CD4-positive, alpha-beta memory T cell (primary cell): ENCODE measurements at regions of chr6 and their contacts with region 1.

Region 1: GRCh38 chr6:135909737-135910387 is 58.4 kb downstream of the PDE7B start:
- DNase-seq: peak; percentile 57 to 73 (median 71)
- H3K4me3 ChIP-seq: no peak overlapping the region
- H3K4me3 Mint-ChIP-seq: no peak overlapping the region
- H3K27ac ChIP-seq: no peak overlapping the region
- H3K27ac Mint-ChIP-seq: no peak overlapping the region
- H3K4me1 ChIP-seq: no peaks in the 10 kb centered on the region
- H3K4me1 Mint-ChIP-seq: peaks cover 2 to 5% (median 4%) of the 10 kb centered on the region in 4 donors
- H3K27me3 ChIP-seq: no peaks in the 10 kb centered on the region
- H3K27me3 Mint-ChIP-seq: no peaks in the 10 kb centered on the region

Region 2: DNA sequence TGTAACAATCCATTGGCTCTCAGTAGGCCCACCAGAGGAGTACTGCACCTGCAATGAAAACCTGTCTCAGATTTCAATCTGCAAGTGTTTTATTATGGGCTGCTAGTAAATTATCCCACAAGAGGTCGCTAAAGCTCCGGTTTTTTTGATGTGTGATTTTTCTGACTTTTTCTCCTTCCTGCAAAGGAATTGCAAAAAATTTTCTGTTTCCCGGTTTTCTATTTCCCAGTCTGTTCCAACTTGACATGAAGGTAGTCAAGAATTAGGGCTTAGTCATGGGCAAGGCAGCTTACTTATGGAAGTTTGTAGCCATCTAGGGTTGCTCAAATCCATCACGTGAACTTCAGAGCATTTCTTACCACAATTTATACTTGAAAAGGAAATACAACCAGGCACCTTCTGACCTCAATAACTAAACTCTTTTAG is 373.9 kb before region 1 on chr6:
- CTCF ChIA-PET with region 1: interaction called, 58 read pairs
- POLR2A ChIA-PET with region 1: interaction called, 3 read pairs
- intact Hi-C with region 1: loop called (anchors 1 kb)
- DNase-seq: peak in 4 of 5 donors; percentile 38 to 47 (median 40)
- H3K4me3 ChIP-seq: no peak overlapping the region
- H3K4me3 Mint-ChIP-seq: peak overlapping the region in 5 of 8 donors; percentile 24 to 57 (median 35)
- H3K27ac ChIP-seq: no peak overlapping the region
- H3K27ac Mint-ChIP-seq: peak overlapping the region in 1 of 7 donors; percentile 2
- H3K4me1 ChIP-seq: no peaks in the 10 kb centered on the region
- H3K4me1 Mint-ChIP-seq: peaks cover 2 to 6% (median 4%) of the 10 kb centered on the region in 4 donors
- H3K27me3 ChIP-seq: no peaks in the 10 kb centered on the region
- H3K27me3 Mint-ChIP-seq: peaks cover 0 to 7% of the 10 kb centered on the region in 2 donors

Region 3: GRCh38 chr6:135680964-135681913 is 228.6 kb before region 1 on chr6:
- CTCF ChIA-PET with region 1: interaction called, 83 read pairs
- POLR2A ChIA-PET with region 1: no interaction called
- intact Hi-C with region 1: loop called (anchors 1 kb)
- DNase-seq: no peak
- H3K4me3 ChIP-seq: no peak overlapping the region
- H3K4me3 Mint-ChIP-seq: no peak overlapping the region
- H3K27ac ChIP-seq: no peak overlapping the region
- H3K27ac Mint-ChIP-seq: no peak overlapping the region
- H3K4me1 ChIP-seq: no peaks in the 10 kb centered on the region
- H3K4me1 Mint-ChIP-seq: no peaks in the 10 kb centered on the region
- H3K27me3 ChIP-seq: no peaks in the 10 kb centered on the region
- H3K27me3 Mint-ChIP-seq: peaks cover 0 to 4% of the 10 kb centered on the region in 2 donors

Region 4: GRCh38 chr6:135811644-135812526 is 98.0 kb before region 1 on chr6:
- CTCF ChIA-PET with region 1: interaction called, 11 read pairs
- POLR2A ChIA-PET with region 1: no interaction called
- intact Hi-C with region 1: no loop called
- DNase-seq: no peak
- H3K4me3 ChIP-seq: no peak overlapping the region
- H3K4me3 Mint-ChIP-seq: no peak overlapping the region
- H3K27ac ChIP-seq: no peak overlapping the region
- H3K27ac Mint-ChIP-seq: no peak overlapping the region
- H3K4me1 ChIP-seq: no peaks in the 10 kb centered on the region
- H3K4me1 Mint-ChIP-seq: no peaks in the 10 kb centered on the region
- H3K27me3 ChIP-seq: no peaks in the 10 kb centered on the region
- H3K27me3 Mint-ChIP-seq: no peaks in the 10 kb centered on the region

Region 5: DNA sequence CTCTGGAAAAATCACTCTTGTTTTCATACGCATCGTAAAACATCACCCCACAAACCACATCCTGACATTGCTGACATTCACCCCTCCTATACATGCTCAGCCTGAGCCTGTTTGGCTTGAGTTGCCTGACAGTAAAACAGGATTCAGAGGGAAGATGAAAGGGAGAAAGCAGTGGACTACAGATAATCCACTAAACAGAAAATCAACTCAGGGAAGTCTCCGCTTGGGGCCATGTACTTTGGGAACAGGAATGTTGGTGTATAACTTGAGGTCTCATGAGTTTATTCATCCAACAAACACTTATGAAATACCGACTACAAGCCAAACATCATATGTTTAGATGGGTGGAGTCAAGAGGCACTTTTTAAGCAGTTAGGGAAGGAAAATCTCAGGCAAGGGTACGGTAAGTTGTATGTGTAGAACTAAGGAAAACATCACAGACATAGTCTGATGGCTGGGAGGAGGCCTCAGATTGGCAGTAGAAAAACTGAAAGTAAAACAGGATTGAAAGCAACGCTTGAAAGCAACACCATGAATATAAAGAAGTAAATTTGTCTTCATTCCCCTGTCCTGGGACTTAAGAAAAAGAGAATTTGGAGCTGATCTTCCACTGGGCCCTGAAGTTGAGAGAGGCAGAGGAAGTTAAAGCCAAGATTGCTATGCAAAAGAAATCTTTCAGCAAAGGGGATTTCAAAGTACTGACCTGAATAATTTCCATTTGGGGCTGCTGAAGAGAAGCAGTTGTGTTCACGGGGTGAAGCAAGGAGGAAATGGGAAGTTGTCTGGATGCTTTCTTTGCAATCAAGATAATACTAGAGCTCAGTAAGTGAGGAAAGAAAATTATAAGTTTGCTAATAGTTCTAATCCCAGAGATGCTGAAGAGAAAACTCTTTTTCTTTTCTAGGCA is 29.5 kb before region 1 on chr6:
- CTCF ChIA-PET with region 1: interaction called, 19 read pairs
- POLR2A ChIA-PET with region 1: interaction called, 5 read pairs
- intact Hi-C with region 1: loop called (anchors 1 kb)
- DNase-seq: peak; percentile 66 to 77 (median 71)
- H3K4me3 ChIP-seq: peak overlapping the region; percentile 34 to 40
- H3K4me3 Mint-ChIP-seq: peak overlapping the region; percentile 77 to 96 (median 85)
- H3K27ac ChIP-seq: peak overlapping the region; percentile 65
- H3K27ac Mint-ChIP-seq: peak overlapping the region; percentile 83 to 98 (median 97)
- H3K4me1 ChIP-seq: peaks cover 35% of the 10 kb centered on the region
- H3K4me1 Mint-ChIP-seq: peaks cover 22 to 46% (median 33%) of the 10 kb centered on the region in 4 donors
- H3K27me3 ChIP-seq: no peaks in the 10 kb centered on the region
- H3K27me3 Mint-ChIP-seq: no peaks in the 10 kb centered on the region

Region 6: DNA sequence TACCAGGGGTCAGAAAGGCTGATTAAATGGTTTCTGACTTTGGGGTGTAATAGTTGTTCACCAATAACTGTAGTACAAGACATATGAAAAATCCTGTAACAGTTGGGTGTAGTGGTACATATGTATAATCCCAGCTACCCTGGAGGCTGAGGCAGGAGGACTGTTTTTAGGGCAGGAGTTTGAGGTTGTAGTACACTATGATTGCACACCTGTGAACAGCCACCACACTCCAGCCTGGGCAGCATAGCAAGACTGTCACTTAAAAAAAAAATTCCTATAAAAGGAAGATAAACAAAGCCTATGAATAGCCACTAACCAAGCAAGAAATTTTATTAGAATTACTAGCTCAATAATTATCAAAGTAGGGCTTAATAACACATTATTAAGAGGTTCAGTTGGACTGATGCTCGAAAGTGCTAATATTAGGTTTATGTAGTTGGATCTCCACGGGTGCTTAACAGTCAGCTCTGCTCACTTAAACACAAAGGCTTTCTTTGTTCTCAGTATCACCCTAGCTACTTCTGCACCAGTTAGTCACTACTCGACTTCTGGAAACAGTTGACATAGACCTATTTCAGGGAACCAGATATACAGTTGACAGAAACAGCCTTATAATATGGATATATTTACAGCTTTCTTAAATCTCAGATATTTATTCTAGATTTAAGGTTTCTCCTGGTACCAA is 227.3 kb after region 1 on chr6:
- CTCF ChIA-PET with region 1: no interaction called
- POLR2A ChIA-PET with region 1: no interaction called
- intact Hi-C with region 1: no loop called
- DNase-seq: no peak
- H3K4me3 ChIP-seq: no peak overlapping the region
- H3K4me3 Mint-ChIP-seq: no peak overlapping the region
- H3K27ac ChIP-seq: no peak overlapping the region
- H3K27ac Mint-ChIP-seq: no peak overlapping the region
- H3K4me1 ChIP-seq: no peaks in the 10 kb centered on the region
- H3K4me1 Mint-ChIP-seq: no peaks in the 10 kb centered on the region
- H3K27me3 ChIP-seq: no peaks in the 10 kb centered on the region
- H3K27me3 Mint-ChIP-seq: peaks cover 2 to 3% of the 10 kb centered on the region in 2 donors